Left ventricle myocardium inferior (tissue), 1 donor: ENCODE measurements at regions of chr3 and their contacts with region 1.

Region 1: DNA sequence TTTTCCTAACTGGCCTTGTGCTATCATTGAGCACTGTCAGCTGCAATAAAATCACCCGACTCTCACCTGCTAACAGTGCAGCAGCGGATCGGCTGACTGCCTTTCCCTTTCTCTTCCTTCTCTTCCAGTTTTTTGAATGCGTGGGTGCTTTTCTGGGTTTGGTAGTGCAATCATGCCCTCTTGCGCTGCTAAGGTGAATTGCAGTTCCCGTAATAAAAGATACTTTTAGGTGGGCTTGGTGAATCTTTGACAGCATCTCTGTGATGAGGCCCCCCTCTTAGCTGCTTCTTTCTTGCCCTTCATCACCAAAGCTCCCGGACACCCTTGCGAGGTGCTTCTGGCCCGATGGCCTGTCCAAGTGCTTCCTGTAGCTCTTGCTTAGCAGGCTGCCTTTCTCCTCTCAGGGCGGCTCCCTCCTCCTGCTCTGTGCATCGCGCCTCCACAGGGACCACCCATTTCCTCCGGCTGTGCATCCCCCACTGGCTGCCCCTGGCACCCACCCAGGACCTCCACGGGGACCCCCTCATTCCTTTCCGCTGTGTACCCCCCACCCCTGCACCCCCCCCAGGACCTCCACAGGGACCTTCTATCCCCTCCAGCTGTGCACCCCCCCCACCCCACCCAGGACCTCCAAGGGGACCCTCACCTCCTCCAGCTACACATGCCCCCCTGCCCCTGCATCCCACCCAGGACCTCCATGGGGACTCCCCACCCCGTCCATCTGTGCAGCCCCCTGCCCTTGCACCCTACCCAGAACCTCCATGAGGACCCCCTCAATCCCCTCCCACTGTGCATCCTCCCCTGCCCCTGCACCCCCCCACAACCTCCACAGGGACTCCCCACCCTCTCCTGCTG is 50.8 kb upstream of the RPL32 start:
- DNase-seq: no peak
- H3K4me3 ChIP-seq: peak overlapping the region; percentile 48
- H3K27ac ChIP-seq: no peak overlapping the region
- H3K4me1 ChIP-seq: peaks cover 44% of the 10 kb centered on the region
- H3K27me3 ChIP-seq: peaks cover 7% of the 10 kb centered on the region
- CTCF ChIP-seq: peak; percentile 95

Region 2: GRCh38 chr3:12175844-12176453 is 716.3 kb before region 1 on chr3:
- intact Hi-C with region 1: no loop called
- DNase-seq: peak; percentile 65
- H3K4me3 ChIP-seq: no peak overlapping the region
- H3K27ac ChIP-seq: no peak overlapping the region
- H3K4me1 ChIP-seq: peaks cover 37% of the 10 kb centered on the region
- H3K27me3 ChIP-seq: no peaks in the 10 kb centered on the region
- CTCF ChIP-seq: peak; percentile 94

Region 3: GRCh38 chr3:12708584-12709192 is 183.5 kb before region 1 on chr3:
- intact Hi-C with region 1: no loop called
- DNase-seq: peak; percentile 34
- H3K4me3 ChIP-seq: no peak overlapping the region
- H3K27ac ChIP-seq: no peak overlapping the region
- H3K4me1 ChIP-seq: peaks cover 23% of the 10 kb centered on the region
- H3K27me3 ChIP-seq: no peaks in the 10 kb centered on the region
- CTCF ChIP-seq: peak; percentile 40

Region 4: GRCh38 chr3:12984023-12984823 is 92.0 kb after region 1 on chr3:
- intact Hi-C with region 1: loop called (anchors 10 kb)
- DNase-seq: peak; percentile 64
- H3K4me3 ChIP-seq: no peak overlapping the region
- H3K27ac ChIP-seq: peak overlapping the region; percentile 95
- H3K4me1 ChIP-seq: peaks cover 69% of the 10 kb centered on the region
- H3K27me3 ChIP-seq: no peaks in the 10 kb centered on the region
- CTCF ChIP-seq: peak; percentile 90